ENCODE measurements at regions of chr10 and their contacts with region 1.

Region 1: DNA sequence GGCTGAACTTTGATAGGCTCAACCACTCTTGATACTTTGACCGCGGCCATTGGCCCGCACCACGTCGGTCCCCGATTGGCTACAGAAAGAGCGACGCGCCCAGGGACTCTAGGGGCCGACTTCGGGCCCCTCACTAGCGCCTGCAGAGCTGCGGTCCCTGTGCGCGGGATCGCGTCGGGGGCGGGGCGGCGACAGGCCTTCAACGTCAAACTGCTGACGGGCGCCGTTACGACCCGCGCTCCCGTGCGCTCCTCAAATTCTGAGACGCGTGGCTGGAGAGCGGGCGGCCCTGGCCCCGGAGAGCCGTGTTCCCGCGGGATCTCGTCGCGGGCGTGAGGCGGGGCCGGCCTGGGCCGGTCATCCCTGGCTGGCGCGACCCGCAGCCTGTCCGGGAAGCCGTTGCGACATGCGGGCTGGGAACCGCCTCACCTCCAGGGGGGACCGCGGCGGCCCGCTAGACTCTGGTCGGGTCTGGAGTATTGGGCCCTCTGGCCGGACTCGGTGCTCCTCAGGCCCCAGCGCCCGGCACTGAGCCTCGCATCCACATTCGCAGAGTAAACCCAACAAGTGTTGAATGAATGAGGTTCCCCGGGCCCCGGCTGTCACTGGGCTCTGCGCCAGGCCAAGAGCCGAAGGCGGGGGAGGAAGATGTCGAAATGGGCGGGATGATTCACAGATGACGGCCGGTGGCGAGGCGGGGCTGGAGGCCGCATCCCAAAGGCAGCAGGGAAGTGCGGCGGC is 644 bp upstream of the SLC25A28 start:
- DNase-seq: peak; percentile 80
- ATAC-seq: peak; percentile 85
- H3K4me3 Mint-ChIP-seq: peak overlapping the region; percentile 92
- H3K27ac Mint-ChIP-seq: peak overlapping the region; percentile 95
- H3K4me1 Mint-ChIP-seq: peaks cover 49% of the 10 kb centered on the region
- H3K27me3 Mint-ChIP-seq: no peaks in the 10 kb centered on the region
- CTCF ChIP-seq: no peak

Region 2: DNA sequence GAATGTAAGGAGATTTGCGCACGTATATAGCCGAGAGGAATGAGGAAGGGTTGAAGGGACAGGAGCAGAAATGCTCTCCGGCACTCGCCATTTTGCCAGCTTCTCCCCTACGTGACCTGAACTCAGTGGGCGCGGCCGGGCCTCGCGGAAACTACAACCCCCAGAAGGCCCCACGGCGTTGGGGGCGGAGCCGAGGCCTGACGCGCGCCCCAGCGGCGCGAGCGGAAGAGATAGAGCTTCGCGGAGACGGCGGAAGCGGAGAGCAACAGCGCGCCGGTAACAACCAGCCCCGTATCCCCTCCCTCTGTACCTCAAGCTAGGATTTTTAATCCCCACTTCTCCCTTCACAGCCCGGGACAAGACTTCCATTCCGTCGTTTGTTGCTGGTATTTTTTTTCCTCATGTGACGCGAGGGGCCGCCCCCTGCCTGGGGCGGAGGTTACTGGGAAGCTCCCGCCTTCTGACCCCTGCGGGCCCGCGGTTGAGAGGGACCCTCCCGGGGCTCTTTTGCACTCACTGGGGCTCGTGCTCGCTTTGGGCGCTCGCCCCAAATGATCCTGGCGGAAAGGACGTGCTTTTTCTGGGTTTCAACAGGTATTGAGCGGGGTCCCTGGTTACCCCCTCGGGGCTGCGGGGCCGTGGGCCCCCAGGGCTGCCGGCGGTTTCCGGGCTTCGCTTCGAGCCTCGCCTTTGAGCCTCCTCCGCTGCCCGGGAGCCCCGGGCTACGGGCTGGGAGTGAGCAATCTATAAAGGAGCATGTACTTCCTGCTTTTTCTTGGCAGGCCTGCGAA is 1486.3 kb before region 1 on chr10 and contains the start of gene R3HCC1L:
- CTCF ChIA-PET with region 1: no interaction called
- POLR2A ChIA-PET with region 1: no interaction called
- intact Hi-C with region 1: loop called (anchors 2 kb)
- DNase-seq: peak; percentile 93
- ATAC-seq: peak; percentile 91
- H3K4me3 Mint-ChIP-seq: peak within 1 kb of the TSS; percentile 94
- H3K27ac Mint-ChIP-seq: peak within 1 kb of the TSS; percentile 97
- H3K4me1 Mint-ChIP-seq: peaks cover 63% of the 10 kb centered on the region
- H3K27me3 Mint-ChIP-seq: no peaks in the 10 kb centered on the region
- CTCF ChIP-seq: no peak
- total RNA-seq, gene R3HCC1L: 24.4 and 24.9 TPM in 2 replicates

Region 3: DNA sequence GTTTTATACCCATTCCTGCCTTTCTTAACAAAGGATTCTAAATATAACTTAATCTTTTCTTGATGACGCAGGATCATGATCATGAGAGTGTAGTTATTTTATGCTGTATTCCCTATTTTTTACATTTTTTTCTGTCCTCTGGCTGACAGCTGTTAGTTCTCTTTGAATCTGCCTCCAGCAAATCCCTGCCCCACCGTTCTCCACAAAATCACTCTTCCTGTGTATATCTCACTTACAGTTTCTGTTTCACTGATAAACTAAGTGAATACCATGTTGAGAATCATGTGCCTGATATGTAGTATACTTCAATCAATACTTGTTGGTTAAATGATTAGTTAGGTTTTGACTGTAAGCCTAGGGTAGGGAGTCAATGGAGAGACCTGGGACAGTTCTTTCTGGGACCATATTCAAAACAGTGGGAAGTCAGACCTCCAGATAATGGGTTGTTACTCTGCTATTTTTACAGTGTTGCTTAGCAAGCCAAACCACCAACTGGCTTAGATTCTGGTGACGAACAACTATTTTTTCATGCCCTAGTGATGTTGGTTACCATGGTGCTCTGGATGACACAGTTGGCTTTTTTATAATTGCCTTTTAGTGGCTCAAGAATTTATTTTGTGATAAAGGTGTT is 278.9 kb before region 1 on chr10:
- CTCF ChIA-PET with region 1: no interaction called
- POLR2A ChIA-PET with region 1: no interaction called
- intact Hi-C with region 1: no loop called
- DNase-seq: no peak
- ATAC-seq: no peak
- H3K4me3 Mint-ChIP-seq: no peak overlapping the region
- H3K27ac Mint-ChIP-seq: no peak overlapping the region
- H3K4me1 Mint-ChIP-seq: no peaks in the 10 kb centered on the region
- H3K27me3 Mint-ChIP-seq: peaks cover 9% of the 10 kb centered on the region
- CTCF ChIP-seq: no peak

Region 4: DNA sequence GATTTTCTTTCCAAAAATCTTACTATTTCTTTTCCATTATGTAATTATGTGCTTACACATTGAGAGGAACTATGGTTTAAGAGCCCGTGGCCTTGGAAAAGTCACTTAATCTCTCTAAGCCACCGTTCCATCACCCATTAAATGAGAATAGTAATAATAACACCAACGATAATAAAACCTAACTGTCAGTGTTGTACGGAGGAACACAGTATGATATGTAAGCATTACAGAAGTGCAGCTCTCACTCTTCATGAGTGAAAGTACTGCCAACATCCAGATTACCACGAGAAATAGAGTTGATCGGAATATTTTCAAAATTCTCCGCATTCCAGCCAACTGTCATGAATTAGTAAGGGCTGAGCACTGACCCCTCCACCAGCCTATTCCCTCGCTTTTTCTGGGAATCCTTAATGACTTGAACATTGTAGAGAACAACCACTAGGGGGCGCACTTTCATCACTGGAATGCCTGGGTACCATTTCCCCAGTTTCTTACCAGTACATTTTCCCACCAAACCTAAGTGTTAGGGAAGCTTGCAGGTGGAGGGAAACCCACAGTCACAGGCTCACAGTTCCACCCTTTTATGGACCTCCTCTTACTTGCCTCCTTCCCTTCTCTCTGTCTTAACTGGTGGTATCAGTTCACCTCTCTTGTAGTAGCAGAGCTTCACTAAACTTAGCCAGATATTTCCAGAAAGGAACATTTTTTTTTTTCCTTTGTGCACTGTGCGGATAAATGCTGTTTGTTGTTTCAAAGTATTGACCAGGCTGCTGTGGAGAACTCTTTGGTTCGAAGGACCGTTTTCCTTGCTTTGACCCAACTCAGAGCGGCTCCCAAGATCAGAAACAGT is 60.4 kb before region 1 on chr10:
- CTCF ChIA-PET with region 1: interaction called, 150 read pairs
- POLR2A ChIA-PET with region 1: interaction called, 3 read pairs
- intact Hi-C with region 1: no loop called
- DNase-seq: no peak
- ATAC-seq: peak; percentile 31
- H3K4me3 Mint-ChIP-seq: no peak overlapping the region
- H3K27ac Mint-ChIP-seq: no peak overlapping the region
- H3K4me1 Mint-ChIP-seq: peaks cover 24% of the 10 kb centered on the region
- H3K27me3 Mint-ChIP-seq: peaks cover 5% of the 10 kb centered on the region
- CTCF ChIP-seq: peak; percentile 62

Region 5: DNA sequence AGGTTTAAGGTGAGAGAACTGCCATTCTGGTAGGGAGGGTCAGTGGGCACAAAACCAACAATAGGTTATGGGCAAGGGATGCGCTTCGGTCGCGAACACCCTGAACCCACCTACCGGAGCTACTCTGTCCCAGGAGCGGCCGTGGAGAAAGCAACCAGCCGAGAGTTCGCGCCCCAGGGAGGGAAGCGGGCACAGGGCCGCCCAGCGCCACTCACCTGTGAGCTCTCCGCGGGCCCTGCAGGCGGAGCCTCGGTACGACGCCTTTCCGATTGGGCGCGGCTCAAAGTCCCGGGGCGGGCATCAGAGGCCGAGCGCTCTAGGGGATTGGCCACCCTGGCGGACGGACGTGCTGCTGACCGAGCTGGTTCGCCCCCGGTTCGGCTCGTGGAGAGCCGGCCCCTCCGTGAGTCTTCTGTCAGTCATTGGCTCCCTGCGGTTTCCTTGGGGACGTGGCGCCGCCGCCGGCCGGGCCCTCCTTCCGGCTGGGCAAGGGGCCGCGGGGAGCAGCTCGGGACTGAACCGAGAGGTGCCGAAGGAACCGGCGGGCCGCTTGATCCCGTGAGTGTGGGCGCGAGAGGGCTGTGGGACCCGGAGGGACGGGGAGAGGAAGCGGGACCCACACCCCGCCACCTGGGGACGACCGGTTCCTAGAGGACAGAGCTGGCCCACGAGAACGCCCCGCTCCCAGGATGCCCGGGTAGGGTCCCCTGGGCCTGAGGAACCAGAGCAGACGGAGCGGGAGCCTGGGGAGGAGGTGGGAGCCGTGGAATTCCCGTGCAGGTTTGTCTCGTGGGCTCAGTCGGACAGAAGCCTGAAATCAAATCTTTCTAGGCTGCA is 38.4 kb after region 1 on chr10 and contains the start of gene ENTPD7:
- CTCF ChIA-PET with region 1: interaction called, 3 read pairs
- POLR2A ChIA-PET with region 1: interaction called, 33 read pairs
- intact Hi-C with region 1: loop called (anchors 1 kb)
- DNase-seq: peak; percentile 82
- ATAC-seq: peak; percentile 99
- H3K4me3 Mint-ChIP-seq: peak within 1 kb of the TSS; percentile 85
- H3K27ac Mint-ChIP-seq: peak within 1 kb of the TSS; percentile 70
- H3K4me1 Mint-ChIP-seq: peaks cover 19% of the 10 kb centered on the region
- H3K27me3 Mint-ChIP-seq: peaks cover 5% of the 10 kb centered on the region
- CTCF ChIP-seq: no peak
- total RNA-seq, gene ENTPD7: 5.2 and 6.2 TPM in 2 replicates

Region 6: DNA sequence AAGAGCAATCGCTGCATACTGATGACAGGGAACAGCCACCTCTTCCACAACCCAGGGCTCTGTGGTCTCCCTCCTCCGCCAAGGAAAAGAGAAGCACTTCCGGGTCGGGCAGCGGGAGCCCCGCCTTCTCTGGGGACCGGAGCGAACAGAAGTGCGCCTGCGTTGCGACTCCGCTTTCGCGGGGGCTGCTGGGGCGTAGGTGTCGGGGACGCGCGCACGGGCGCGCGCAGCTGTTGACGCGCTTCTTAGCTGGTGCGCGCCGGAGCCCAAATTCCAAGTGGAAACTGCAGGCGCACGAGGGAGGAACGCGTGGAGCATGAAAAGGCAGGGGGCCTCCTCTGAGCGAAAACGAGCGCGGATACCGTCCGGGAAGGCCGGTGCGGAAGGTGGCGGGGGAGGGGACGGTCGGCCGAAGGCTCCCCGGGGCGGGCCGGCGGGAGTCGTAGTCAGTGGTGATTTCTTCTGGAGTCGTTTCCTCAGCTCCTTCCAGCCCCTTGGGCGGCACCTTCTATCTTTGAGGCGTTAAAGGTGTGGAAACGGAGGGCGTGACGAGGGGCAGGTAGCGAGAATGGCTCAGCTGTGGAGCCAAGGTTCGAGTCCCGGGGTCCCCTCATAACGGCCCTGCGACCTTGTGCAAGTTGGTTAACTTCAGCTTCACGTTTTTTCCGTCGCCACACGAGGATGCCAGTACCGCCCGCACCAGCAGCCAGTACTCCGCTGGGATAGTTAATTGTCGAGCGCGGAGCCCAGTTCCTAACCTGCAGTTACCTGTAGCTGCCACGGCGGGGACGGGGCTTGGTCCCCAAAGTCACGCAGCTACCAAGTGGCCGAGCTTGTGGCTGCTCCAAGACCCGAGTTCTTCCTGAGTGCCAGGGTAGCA is 111.4 kb after region 1 on chr10 and contains the starts of genes COX15 and CUTC:
- CTCF ChIA-PET with region 1: no interaction called
- POLR2A ChIA-PET with region 1: interaction called, 19 read pairs
- intact Hi-C with region 1: loop called (anchors 1 kb)
- DNase-seq: peak; percentile 91
- ATAC-seq: peak; percentile 88
- H3K4me3 Mint-ChIP-seq: peak within 1 kb of the TSS; percentile 100
- H3K27ac Mint-ChIP-seq: peak within 1 kb of the TSS; percentile 99
- H3K4me1 Mint-ChIP-seq: peaks cover 31% of the 10 kb centered on the region
- H3K27me3 Mint-ChIP-seq: no peaks in the 10 kb centered on the region
- CTCF ChIP-seq: no peak
- total RNA-seq, gene COX15: 39.8 and 44.5 TPM in 2 replicates
- total RNA-seq, gene CUTC: 25.4 and 27.5 TPM in 2 replicates

Measured in activated B cell treated with CpG ODN at 0.5 μM for 24 hours (primary cell).